PC-9 (cell line): ENCODE measurements at regions of chr19 and their contacts with region 1.

Region 1: GRCh38 chr19:44626048-44626624 is 12.8 kb downstream of the IGSF23 start:
- DNase-seq: peak; percentile 94 to 98
- H3K4me3 ChIP-seq: no peak overlapping the region
- H3K27ac ChIP-seq: peak overlapping the region; percentile 91
- H3K4me1 ChIP-seq: peaks cover 31% of the 10 kb centered on the region
- H3K27me3 ChIP-seq: no peaks in the 10 kb centered on the region
- CTCF ChIP-seq: no peak

Region 2: DNA sequence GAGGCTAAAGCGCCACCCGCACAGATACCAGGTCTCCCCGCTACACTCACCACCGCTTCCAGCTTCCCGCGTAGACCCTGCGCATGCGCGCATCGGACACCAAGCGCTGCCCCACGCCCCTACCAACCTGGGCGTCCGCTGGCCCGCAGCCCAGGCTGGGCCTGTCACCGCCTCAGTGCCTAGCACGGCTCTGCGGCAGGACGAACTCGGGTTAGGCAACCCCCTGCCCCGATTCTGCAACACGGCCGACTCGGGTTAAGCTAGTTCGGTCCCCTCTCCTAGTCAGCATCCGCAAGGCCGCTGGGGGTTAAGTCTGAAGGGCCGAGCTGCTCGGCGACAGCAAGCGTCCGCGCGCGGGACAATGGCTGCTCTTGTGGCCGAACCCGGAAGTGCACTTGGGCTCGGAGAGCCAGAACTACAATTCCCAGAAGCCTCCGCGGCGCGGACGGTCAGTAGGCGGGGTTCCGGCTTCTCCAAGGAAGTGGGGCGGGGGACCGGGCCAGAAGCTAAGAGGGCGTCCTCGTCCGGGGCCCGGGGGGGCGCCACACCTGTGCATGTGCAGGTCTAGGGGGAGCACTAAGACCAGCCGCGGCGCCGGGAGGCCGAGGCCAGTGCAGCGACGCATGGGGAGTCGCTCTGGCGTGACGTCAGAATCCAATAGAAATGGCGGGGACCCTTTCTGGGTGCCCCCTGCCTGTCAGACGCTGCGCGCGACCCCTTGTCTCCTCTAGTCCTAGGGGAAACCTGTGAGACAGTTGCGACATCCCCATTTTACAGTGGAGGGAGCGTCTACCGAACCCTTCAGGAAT is 125.8 kb before region 1 on chr19 and contains the start of gene ZNF180:
- CTCF ChIA-PET with region 1: interaction called, 15 read pairs
- POLR2A ChIA-PET with region 1: no interaction called
- intact Hi-C with region 1: no loop called
- DNase-seq: peak; percentile 96 to 97
- H3K4me3 ChIP-seq: peak within 1 kb of the TSS; percentile 68
- H3K27ac ChIP-seq: peak within 1 kb of the TSS; percentile 30
- H3K4me1 ChIP-seq: peaks cover 4% of the 10 kb centered on the region; the same call in 1 of the 2 replicates
- H3K27me3 ChIP-seq: no peaks in the 10 kb centered on the region
- CTCF ChIP-seq: peak; percentile 83
- total RNA-seq, gene ZNF180: 6.3 and 11.3 TPM in 2 replicates